MCF 10A (cell line): ENCODE measurements at regions of chr1 and their contacts with region 1.

Region 1: DNA sequence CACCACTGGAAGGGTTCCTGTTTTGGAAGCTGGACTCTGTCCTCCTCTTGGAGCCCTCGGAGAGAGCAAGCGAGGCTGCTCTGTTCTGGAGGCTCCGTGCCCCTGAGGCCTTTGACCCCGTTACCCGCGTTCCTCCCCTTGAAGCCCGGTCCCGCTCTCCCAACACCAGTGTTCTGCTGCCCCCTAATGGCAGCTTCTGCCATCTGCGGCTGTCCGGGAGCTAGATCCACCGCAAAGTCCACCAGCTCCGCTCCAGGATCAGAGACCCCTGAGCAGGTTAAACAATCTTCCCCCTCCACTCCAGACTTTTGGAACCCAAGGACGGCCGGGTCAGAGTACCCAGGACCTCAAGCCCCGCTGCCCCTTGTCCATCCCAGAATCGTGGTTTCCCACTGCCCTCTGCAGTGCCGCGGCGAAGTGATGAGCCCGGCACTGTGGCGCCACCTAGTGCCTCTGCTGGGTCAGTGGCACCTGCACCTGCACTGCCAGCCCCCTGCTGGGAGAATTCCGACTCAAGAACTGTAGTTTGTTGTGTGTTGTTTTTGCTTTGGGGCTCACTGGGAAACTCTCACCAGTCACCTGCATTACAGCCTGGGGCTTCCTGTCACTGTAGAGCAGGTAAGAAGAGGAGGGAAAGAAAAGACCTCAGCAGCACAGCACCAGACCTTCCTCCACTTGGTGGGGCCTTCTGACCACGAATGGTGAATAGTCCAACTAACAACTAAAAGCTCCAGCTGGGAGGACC is 63.5 kb upstream of the NFASC start:
- DNase-seq: peak; percentile 94
- H3K4me3 Mint-ChIP-seq: peak overlapping the region; percentile 69
- H3K27ac Mint-ChIP-seq: no peak overlapping the region
- H3K4me1 Mint-ChIP-seq: no peaks in the 10 kb centered on the region
- H3K27me3 Mint-ChIP-seq: peaks cover 25% of the 10 kb centered on the region
- CTCF ChIP-seq: peak; percentile 99

Region 2: DNA sequence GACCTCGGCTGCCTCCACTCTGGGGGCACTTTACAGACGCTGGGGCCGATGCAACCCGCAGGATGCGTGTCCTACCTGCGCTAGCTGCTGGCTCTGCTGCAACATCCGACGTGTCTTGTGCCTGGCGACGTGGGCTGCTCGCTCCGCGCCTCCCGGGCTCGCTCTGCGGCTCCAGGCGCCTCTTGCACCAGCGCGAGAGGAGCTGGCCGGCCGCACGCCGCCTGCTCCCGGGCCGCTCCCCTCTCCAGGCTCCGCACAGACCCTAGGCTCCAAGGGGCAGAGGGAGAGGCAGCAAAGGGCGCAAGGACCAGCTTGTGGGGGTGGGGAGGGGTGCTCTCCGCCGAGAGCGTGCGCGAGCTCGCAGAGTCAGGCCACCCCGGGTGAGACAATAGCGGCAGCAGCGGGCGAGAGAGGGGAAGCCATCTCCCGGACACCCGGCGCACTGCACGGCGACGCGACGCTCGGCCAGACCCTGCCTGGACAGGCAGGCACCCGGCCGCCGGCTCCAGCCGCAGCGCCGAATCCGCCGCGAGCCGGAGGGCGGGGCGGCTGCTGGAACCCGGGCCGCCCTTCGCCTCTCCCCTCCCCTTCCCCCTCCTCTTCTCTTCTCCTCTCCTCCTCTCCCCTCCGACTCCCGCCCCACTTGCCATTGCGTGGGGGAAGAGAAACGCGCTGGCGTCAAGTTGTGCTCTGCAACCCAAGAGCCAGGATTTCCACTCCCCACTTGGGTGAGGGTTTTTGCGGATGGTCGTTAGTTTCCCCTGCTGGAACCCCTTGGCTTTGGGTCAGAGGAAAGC is 312.6 kb before region 1 on chr1 and contains the start of gene PIK3C2B:
- CTCF ChIA-PET with region 1: interaction called, 24 read pairs
- POLR2A ChIA-PET with region 1: interaction called, 4 read pairs
- intact Hi-C with region 1: no loop called
- DNase-seq: peak; percentile 92
- H3K4me3 Mint-ChIP-seq: peak within 1 kb of the TSS; percentile 86
- H3K27ac Mint-ChIP-seq: peak within 1 kb of the TSS; percentile 24
- H3K4me1 Mint-ChIP-seq: peaks cover 26% of the 10 kb centered on the region
- H3K27me3 Mint-ChIP-seq: peaks cover 41% of the 10 kb centered on the region
- CTCF ChIP-seq: peak; percentile 93
- total RNA-seq, gene PIK3C2B: 3.4 and 4.4 TPM in 2 replicates

Region 3: DNA sequence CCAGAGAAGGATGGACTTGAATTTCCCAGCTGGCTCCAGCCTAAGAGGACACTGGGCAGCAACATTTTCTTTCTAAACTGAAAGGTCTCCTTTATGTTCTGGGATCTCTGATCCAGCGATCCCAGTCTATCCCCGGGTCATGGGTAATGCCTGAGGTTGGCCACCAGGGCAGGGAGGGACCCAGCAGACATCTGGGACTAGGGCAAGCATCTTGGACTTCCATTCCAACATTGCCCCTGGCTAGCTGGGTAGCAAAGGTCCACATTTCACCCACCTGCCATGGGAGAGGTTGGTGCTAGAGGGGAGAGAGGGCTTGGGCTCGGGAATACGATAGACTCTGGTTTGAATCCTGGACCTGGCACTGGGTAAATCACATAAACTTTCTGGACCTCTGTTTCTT is 206.1 kb before region 1 on chr1:
- CTCF ChIA-PET with region 1: interaction called, 15 read pairs
- POLR2A ChIA-PET with region 1: no interaction called
- intact Hi-C with region 1: no loop called
- DNase-seq: peak; percentile 20
- H3K4me3 Mint-ChIP-seq: no peak overlapping the region
- H3K27ac Mint-ChIP-seq: no peak overlapping the region
- H3K4me1 Mint-ChIP-seq: no peaks in the 10 kb centered on the region
- H3K27me3 Mint-ChIP-seq: peaks cover 38% of the 10 kb centered on the region
- CTCF ChIP-seq: peak; percentile 30

Region 4: DNA sequence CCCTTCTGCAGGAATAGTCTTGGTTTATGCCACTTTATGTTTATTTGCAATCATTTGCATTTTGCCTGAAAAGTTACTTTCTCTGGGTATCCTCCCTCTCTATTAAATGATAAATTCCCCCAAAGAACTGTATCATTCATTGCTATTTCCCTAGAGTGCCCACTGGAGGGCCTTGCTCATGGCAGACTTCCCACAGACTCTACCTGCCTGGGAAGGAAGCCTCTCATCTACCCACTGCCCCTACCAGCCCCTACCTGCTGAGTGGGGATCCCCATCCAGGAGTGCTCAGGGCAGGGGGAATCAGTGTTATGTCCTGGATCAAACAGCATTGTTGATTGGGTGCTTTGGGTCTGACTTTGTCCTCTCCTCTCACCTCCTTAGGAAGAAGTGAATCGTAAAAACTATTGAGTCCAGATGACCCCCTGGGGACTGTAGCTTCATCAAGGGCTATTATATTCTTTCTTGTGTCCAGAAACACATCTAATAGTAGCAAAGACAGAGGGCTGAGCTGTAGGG is 114.7 kb before region 1 on chr1:
- CTCF ChIA-PET with region 1: interaction called, 24 read pairs
- POLR2A ChIA-PET with region 1: no interaction called
- intact Hi-C with region 1: no loop called
- DNase-seq: peak; percentile 22
- H3K4me3 Mint-ChIP-seq: no peak overlapping the region
- H3K27ac Mint-ChIP-seq: no peak overlapping the region
- H3K4me1 Mint-ChIP-seq: no peaks in the 10 kb centered on the region
- H3K27me3 Mint-ChIP-seq: peaks cover 5% of the 10 kb centered on the region
- CTCF ChIP-seq: no peak

Region 5: DNA sequence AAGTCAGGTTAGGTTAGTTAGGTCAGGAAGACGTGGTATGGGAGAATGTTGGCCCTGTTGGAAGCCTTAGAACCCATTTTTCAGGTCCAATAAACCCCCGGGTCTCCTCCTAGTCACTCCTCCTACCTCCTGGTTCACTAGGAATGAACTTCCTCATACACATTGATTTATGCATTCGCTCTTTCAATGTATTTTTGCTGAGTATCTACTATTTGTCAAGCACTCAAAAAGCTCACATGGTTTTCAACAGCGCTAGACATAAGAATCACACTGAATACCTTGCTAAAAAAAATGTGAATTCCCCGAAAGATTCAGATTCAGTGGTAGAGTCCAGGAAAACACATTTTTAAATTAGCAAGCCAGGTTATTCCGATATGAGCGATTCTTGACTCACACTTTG is 35.8 kb before region 1 on chr1:
- CTCF ChIA-PET with region 1: interaction called, 55 read pairs
- POLR2A ChIA-PET with region 1: interaction called, 3 read pairs
- intact Hi-C with region 1: no loop called
- DNase-seq: no peak
- H3K4me3 Mint-ChIP-seq: no peak overlapping the region
- H3K27ac Mint-ChIP-seq: no peak overlapping the region
- H3K4me1 Mint-ChIP-seq: no peaks in the 10 kb centered on the region
- H3K27me3 Mint-ChIP-seq: peaks cover 97% of the 10 kb centered on the region
- CTCF ChIP-seq: no peak

Region 6: DNA sequence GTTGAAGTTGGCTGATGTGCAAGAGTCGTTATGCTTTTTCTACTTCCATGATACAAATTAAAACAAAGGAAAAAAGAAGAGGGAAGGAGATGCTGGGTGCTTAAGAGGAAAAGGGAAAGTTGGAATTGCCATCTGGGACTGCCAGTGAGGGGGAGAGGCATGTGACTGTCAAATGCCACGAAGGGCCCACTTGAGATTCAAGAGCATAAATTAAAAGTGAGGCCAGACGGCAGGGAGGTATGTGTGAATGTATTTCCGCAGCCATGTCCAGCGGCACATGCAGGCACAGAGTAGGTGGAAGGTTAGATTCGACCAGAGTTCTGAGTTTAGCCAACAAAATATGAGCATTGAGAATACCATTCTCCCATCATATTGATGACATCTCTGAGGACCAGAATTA is 95.6 kb after region 1 on chr1:
- CTCF ChIA-PET with region 1: interaction called, 17 read pairs
- POLR2A ChIA-PET with region 1: no interaction called
- intact Hi-C with region 1: no loop called
- DNase-seq: no peak
- H3K4me3 Mint-ChIP-seq: no peak overlapping the region
- H3K27ac Mint-ChIP-seq: no peak overlapping the region
- H3K4me1 Mint-ChIP-seq: no peaks in the 10 kb centered on the region
- H3K27me3 Mint-ChIP-seq: peaks cover 92% of the 10 kb centered on the region
- CTCF ChIP-seq: no peak